Thyroid gland (tissue), 4 donors: ENCODE measurements at regions of chr13 and their contacts with region 1.

Region 1: GRCh38 chr13:26601669-26602068 is 44.2 kb downstream of the WASF3 start:
- DNase-seq: no peak
- H3K4me3 ChIP-seq: no peak overlapping the region
- H3K27ac ChIP-seq: peak overlapping the region in 1 of 3 donors; percentile 43
- H3K4me1 ChIP-seq: peaks cover 61 to 66% of the 10 kb centered on the region in 2 donors
- H3K27me3 ChIP-seq: no peaks in the 10 kb centered on the region
- CTCF ChIP-seq: peak in 3 of 6 experiments; percentile 19 to 28 (median 27)
- POLR2A ChIP-seq: no peak

Region 2: GRCh38 chr13:26557393-26558023 is 44.2 kb before region 1 on chr13 and contains the start of gene WASF3:
- intact Hi-C with region 1: loop called (anchors 10 kb)
- DNase-seq: peak; percentile 97 to 98
- H3K4me3 ChIP-seq: peak within 1 kb of the TSS; percentile 37 to 93 (median 81)
- H3K27ac ChIP-seq: peak within 1 kb of the TSS in 2 of 3 donors; percentile 21 to 40
- H3K4me1 ChIP-seq: peaks cover 18 to 23% of the 10 kb centered on the region in 2 donors
- H3K27me3 ChIP-seq: no peaks in the 10 kb centered on the region
- CTCF ChIP-seq: no peak
- POLR2A ChIP-seq: peak; percentile 62 to 92
- total RNA-seq, gene WASF3: 41.0 to 56.1 (median 48.6) TPM